Naive thymus-derived CD8-positive, alpha-beta T cell (primary cell): ENCODE measurements at regions of chr17 and their contacts with region 1.

Region 1: DNA sequence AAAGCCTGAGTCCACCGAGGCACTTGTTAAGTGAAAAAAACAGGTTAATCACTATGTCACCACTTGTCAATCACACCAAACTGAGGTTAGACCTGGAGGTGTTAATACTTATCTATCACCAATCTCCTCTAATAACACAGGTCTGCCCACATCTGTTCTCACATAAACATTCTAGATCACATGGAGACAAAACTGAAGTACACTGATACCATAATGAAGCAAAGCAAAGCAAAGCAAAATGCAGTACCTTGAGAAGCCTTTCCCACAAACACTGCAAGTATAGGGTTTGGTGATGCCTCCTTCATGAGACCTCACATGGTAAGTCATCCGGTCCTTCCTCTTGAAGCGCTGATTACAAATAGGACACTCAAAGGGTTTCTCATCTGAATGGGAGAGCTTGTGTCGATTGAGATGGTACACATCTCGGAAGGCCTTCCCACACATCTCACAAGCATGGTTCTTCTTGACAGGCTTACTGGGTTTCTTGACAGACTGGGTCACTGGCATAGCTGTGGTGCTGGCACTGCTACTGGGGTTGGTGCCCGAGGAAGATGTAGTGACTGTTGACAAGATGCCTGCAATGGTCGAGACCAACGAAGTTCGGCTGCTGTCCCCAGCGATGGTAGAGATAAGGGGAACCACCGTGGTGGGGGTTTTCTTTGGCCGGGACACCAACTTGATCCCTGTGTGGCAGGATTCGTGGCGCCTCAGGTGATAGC is 5.4 kb downstream of the VEZF1 start:
- DNase-seq: no peak
- ATAC-seq: no peak
- H3K4me3 Mint-ChIP-seq: peak overlapping the region in 9 of 10 donors; percentile 1 to 91 (median 40)
- H3K27ac Mint-ChIP-seq: peak overlapping the region in 9 of 10 donors; percentile 1 to 72 (median 42)
- H3K4me1 Mint-ChIP-seq: peaks cover 40 to 72% (median 67%) of the 10 kb centered on the region in 4 donors
- H3K27me3 Mint-ChIP-seq: no peaks in the 10 kb centered on the region

Region 2: GRCh38 chr17:57938061-57938559 is 44.5 kb before region 1 on chr17:
- POLR2A ChIA-PET with region 1: interaction called, 10 read pairs
- DNase-seq: no peak
- ATAC-seq: no peak
- H3K4me3 Mint-ChIP-seq: no peak overlapping the region
- H3K27ac Mint-ChIP-seq: no peak overlapping the region
- H3K4me1 Mint-ChIP-seq: peaks cover 4 to 24% (median 10%) of the 10 kb centered on the region in 4 donors
- H3K27me3 Mint-ChIP-seq: peaks cover 4 to 18% (median 10%) of the 10 kb centered on the region in 5 donors

Region 3: DNA sequence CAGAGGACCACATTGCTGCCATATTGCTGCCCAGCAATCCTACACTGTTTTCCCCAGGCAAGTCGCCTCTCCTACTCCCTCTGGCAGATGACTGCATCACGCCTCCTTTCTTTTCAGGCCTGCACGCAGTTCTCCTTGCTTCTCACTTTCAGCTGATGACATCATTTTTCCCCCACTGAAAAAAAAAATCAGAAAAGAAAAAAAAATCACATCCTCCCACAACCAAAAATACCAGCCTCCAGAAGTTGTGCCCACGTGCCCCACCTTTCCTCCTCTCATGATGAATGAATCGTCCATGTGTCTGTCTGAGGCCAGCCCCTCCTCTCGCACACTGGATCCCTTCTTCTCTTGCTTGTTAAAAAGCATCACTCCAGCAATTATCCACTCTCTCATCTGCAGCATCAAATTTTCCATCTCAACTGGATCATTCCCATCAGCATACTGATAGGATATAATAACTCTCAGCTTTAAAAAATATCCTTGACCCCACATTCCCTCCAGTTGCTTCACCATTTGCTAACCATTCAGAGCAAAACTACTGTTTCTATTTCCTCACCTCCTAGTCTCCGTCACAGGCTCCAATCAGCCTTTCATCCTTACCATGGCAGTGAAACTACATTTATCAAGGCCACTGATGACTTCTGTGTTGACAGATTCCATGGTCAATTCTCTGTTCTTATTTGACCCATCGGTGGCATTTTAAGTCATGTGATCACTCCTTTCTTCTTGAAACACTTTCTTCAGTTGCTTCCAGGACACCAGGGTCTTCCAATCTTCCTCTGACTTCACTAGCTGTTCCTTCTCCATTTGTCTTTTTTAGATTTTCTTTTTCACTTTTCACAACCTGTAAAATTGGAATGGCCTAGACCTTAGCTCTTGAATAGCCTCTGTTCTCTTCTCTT is 70.6 kb after region 1 on chr17:
- POLR2A ChIA-PET with region 1: no interaction called
- DNase-seq: no peak
- ATAC-seq: peak in 1 of 2 donors; percentile 33
- H3K4me3 Mint-ChIP-seq: no peak overlapping the region
- H3K27ac Mint-ChIP-seq: peak overlapping the region in 1 of 10 donors; percentile 81
- H3K4me1 Mint-ChIP-seq: peaks cover 4 to 9% (median 8%) of the 10 kb centered on the region in 4 donors
- H3K27me3 Mint-ChIP-seq: peaks cover 0 to 5% (median 1%) of the 10 kb centered on the region in 5 donors